Adrenal gland (tissue), 19 donors: ENCODE measurements at regions of chr7 and their contacts with region 1.

Region 1: DNA sequence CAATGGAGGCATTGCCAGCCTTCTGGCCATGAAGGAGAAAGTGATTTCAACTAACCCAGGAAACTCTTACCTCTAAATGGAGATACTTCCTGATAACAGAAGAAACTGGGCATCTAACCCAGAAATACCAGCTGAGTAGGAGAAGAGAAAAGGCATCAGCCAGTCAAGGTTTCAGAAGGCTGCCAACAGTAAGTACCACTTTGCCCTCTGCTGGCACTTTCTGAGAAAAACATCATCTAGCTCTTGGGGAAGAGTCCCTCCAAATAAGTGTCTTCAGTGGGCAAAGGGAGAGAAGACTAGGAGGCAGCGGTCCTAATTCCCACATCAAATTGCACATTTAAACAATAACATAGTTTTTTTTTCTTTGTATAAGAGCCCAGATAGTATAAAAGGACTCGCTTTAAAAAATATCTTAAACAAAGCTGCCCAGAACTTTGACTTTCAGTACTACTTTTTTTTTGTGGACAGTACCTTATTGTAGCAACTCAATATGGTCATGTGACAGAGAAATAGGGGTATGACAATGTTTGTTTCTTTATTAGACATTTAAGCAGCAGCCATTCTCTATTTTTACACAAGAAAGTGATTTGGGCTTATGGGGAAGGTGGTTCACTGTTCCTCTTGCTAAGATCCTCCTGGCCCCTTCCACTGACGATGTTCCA is 157.3 kb downstream of the CTTNBP2 start:
- DNase-seq: peak in 4 of 7 donors; percentile 22 to 45 (median 26)
- H3K4me3 ChIP-seq: no peak overlapping the region
- H3K27ac ChIP-seq: no peak overlapping the region
- H3K4me1 ChIP-seq: no peaks in the 10 kb centered on the region
- H3K27me3 ChIP-seq: no peaks in the 10 kb centered on the region
- CTCF ChIP-seq: peak in 5 of 6 experiments; percentile 31 to 57 (median 39)
- POLR2A ChIP-seq: no peak

Region 2: GRCh38 chr7:117458977-117459583 is 256.8 kb before region 1 on chr7:
- intact Hi-C with region 1: loop called in 1 of 2 experiments (anchors 10 kb)
- DNase-seq: no peak
- H3K4me3 ChIP-seq: no peak overlapping the region
- H3K27ac ChIP-seq: no peak overlapping the region
- H3K4me1 ChIP-seq: no peaks in the 10 kb centered on the region
- H3K27me3 ChIP-seq: no peaks in the 10 kb centered on the region
- CTCF ChIP-seq: peak; percentile 28 to 62 (median 37)
- POLR2A ChIP-seq: no peak